ENCODE measurements at regions of chr20 and their contacts with region 1.

Region 1: DNA sequence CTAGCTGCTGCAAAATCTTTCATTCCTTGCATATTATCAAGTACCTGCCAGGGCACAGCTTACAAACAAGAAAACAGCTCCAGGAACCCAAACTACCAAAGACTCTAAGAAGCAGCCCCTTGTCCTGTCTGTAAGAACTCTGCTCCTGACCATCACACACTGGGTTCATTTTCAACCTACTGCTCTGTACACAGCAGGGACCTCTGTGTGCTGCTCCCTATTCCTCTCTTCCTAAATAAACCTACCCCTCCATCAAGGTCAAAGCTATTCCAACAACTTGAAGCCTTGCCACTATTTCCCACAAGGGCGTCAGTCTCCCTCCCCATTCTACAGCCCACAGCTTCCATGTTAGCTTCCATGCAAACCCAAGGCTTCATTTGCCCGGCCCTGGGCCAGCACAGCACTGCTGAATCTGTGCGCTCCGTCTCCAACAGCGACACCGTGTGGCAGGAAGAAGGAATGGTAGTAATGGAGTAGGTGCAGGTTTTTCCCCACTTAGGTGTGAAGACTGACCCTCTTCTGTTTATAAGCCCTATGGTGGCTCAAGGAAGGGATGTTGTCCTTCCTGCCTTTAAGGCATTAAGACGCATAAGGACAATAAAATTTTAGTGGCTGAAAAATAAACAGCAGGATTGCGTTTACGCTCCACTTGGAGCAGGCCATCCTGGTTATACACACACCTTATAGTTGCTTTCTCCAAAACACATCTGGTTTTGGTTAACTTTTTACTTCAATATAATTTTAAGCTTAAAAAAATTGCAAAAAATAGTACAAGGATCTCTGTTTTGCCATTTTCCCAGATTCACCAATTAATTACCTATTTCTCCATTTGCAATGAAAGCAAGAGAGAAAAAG is 115.2 kb upstream of the NXT1 start:
- DNase-seq: peak; percentile 74 to 89 (median 88)
- ATAC-seq: peak; percentile 88 to 94
- H3K4me3 ChIP-seq: no peak overlapping the region
- H3K27ac ChIP-seq: no peak overlapping the region
- H3K4me1 ChIP-seq: no peaks in the 10 kb centered on the region
- H3K27me3 ChIP-seq: no peaks in the 10 kb centered on the region

Region 2: DNA sequence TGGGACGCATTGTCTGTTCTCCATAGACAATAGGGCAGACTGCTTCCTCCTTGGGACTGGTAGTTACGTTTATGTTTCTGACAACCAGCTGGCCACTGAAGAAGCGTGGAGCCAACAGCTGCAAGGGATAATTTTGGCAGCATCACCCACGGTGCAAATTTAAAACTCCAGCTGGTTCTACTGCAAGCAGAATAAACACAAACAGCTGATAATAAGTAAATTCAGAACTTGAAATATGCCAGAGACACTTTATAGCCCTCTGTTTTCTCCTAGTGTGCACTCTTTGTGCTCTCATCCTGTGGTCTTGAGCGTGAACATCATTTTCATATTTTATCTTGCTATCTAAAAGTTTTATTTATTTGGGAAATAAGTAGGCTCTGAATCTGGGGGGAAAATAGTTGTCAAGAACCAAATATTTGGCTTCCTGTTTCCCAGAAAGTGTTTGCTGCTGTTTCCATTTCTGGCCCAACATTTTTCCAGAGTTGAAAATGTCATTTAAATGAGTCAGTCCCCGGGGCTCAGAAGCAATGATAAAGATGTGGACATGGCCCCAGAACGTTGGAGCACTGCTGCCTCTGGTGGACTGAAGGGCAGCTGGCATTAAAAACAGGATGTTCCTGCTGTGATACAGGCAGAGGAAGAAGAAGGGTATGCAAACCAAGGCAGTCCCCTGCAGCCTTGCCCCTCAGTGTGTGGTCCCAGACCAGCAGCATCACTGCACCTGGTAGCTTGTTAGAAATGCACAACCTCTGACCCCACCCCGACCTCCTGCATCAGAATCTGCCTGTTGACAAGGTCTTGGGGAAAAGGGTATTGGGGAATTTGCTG is 173.5 kb before region 1 on chr20:
- intact Hi-C with region 1: loop called in 2 of 4 experiments (anchors 5 to 10 kb)
- DNase-seq: peak; percentile 68 to 85 (median 70)
- ATAC-seq: peak; percentile 91 to 94
- H3K4me3 ChIP-seq: no peak overlapping the region
- H3K27ac ChIP-seq: peak overlapping the region; percentile 74
- H3K4me1 ChIP-seq: peaks cover 17% of the 10 kb centered on the region
- H3K27me3 ChIP-seq: no peaks in the 10 kb centered on the region